ENCODE measurements at regions of chr1 and their contacts with region 1.

Region 1: DNA sequence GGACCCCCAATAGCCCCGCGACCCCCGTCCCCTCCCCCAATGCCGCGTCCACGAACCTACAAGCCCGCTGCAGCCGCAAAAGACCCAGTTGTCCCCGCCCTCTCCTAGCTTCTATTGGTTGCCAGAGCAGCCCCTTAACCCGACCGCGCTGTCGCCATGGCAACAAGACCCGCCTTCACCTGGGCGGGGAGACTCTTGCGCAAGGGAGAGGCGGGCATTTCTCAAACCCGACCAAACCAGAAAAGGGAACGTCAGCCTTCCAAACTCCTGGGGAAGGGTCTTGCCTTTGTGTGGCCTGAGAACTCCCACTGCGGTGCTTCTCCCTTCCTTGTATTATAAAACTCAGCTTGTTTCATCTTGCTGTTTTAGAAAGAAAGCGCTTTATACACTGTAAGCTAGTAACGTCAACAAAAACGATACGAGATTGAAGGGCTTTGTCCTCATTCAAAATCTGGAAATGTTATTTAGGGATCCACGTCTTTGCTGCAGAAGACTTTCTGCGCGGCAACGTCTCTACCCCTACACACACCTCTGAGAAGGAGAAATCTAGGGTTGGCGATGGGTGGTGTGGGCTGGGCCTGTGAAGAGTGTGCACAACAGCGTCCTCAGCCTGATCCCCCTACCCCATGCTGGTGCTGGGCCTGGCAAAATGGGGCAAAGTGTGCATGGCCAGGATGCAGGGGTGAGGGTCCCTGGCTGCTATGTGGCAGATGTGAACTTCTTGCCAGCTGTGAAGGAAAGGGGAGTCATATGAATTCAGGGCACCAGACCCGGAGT is at the start of gene TMEM9:
- DNase-seq: peak; percentile 96
- ATAC-seq: peak; percentile 98
- H3K4me3 ChIP-seq: peak within 1 kb of the TSS; percentile 19 to 81 (median 71)
- H3K4me3 Mint-ChIP-seq: peak within 1 kb of the TSS; percentile 90
- H3K27ac ChIP-seq: peak within 1 kb of the TSS in 1 of 2 donors; percentile 52
- H3K27ac Mint-ChIP-seq: peak within 1 kb of the TSS; percentile 86
- H3K4me1 ChIP-seq: peaks cover 9 to 17% of the 10 kb centered on the region in 2 donors
- H3K4me1 Mint-ChIP-seq: peaks cover 18% of the 10 kb centered on the region
- H3K27me3 ChIP-seq: peaks cover 0 to 16% (median 4%) of the 10 kb centered on the region in 4 experiments
- H3K27me3 Mint-ChIP-seq: peaks cover 14% of the 10 kb centered on the region
- CTCF ChIP-seq: no peak
- total RNA-seq, gene TMEM9: 28.9 and 29.2 TPM in 2 replicates

Region 2: GRCh38 chr1:201053158-201053860 is 101.3 kb before region 1 on chr1:
- CTCF ChIA-PET with region 1: no interaction called
- POLR2A ChIA-PET with region 1: no interaction called
- intact Hi-C with region 1: no loop called
- DNase-seq: no peak
- ATAC-seq: peak; percentile 65
- H3K4me3 ChIP-seq: no peak overlapping the region
- H3K4me3 Mint-ChIP-seq: no peak overlapping the region
- H3K27ac ChIP-seq: no peak overlapping the region
- H3K27ac Mint-ChIP-seq: no peak overlapping the region
- H3K4me1 ChIP-seq: peaks cover 32 to 74% of the 10 kb centered on the region in 2 donors
- H3K4me1 Mint-ChIP-seq: peaks cover 65% of the 10 kb centered on the region
- H3K27me3 ChIP-seq: peaks cover 0 to 2% (median 0%) of the 10 kb centered on the region in 4 experiments
- H3K27me3 Mint-ChIP-seq: no peaks in the 10 kb centered on the region
- CTCF ChIP-seq: no peak

Region 3: GRCh38 chr1:201114236-201115131 is 40.1 kb before region 1 on chr1:
- CTCF ChIA-PET with region 1: interaction called, 3 read pairs
- POLR2A ChIA-PET with region 1: interaction called, 3 read pairs
- intact Hi-C with region 1: loop called (anchors 1 kb)
- DNase-seq: peak; percentile 78
- ATAC-seq: peak; percentile 88
- H3K4me3 ChIP-seq: peak overlapping the region; percentile 31 to 77 (median 58)
- H3K4me3 Mint-ChIP-seq: peak overlapping the region; percentile 87
- H3K27ac ChIP-seq: no peak overlapping the region
- H3K27ac Mint-ChIP-seq: no peak overlapping the region
- H3K4me1 ChIP-seq: peaks cover 4 to 13% of the 10 kb centered on the region in 2 donors
- H3K4me1 Mint-ChIP-seq: peaks cover 4% of the 10 kb centered on the region
- H3K27me3 ChIP-seq: peaks cover 0 to 32% (median 14%) of the 10 kb centered on the region in 4 experiments
- H3K27me3 Mint-ChIP-seq: peaks cover 29% of the 10 kb centered on the region
- CTCF ChIP-seq: peak; percentile 75

Region 4: GRCh38 chr1:201170533-201171062 is 16.0 kb after region 1 on chr1:
- CTCF ChIA-PET with region 1: interaction called, 6 read pairs
- POLR2A ChIA-PET with region 1: interaction called, 7 read pairs
- intact Hi-C with region 1: loop called (anchors 1 kb)
- DNase-seq: peak; percentile 77
- ATAC-seq: peak; percentile 99
- H3K4me3 ChIP-seq: peak overlapping the region in 4 of 5 experiments; percentile 43 to 80 (median 62)
- H3K4me3 Mint-ChIP-seq: peak overlapping the region; percentile 90
- H3K27ac ChIP-seq: peak overlapping the region in 1 of 2 donors; percentile 20
- H3K27ac Mint-ChIP-seq: peak overlapping the region; percentile 77
- H3K4me1 ChIP-seq: peaks cover 7 to 14% of the 10 kb centered on the region in 2 donors
- H3K4me1 Mint-ChIP-seq: peaks cover 16% of the 10 kb centered on the region
- H3K27me3 ChIP-seq: peaks cover 0 to 22% (median 0%) of the 10 kb centered on the region in 4 experiments
- H3K27me3 Mint-ChIP-seq: peaks cover 13% of the 10 kb centered on the region
- CTCF ChIP-seq: no peak

Region 5: DNA sequence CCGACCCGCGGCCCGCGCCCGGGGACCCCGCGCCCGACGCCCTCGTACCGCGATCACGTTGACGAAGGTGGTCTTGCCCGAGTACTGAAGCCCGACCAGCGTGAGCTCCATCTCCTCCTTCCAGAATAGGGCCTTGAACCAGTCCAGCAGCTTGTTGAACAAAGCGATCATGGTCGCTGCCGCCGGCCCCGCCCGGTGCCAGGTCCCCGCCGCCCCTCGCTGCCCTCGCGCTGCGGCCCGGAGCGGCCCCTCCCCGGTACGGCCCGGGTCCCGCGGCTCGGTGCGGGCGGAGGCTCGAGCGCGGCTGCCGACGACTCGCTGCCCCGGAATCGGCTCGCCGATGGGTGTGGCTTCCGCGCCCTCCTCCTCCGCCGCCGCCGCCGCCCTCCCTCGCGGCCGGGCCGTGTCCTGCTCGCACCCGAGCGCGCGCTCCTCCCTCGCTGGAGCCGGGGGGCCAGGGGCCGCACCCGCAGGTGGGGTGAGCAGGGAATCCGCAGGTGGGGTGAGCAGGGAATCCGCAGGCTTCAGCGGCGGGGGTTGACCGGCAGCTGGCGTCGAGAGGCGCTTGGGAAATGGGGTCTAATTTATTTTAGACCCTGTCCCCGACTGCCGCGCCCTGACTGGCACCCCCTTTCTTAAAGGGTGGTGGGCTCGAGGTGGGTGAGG is 990.0 kb after region 1 on chr1 and contains the start of gene ARL8A:
- CTCF ChIA-PET with region 1: no interaction called
- POLR2A ChIA-PET with region 1: no interaction called
- intact Hi-C with region 1: loop called (anchors 10 kb)
- DNase-seq: peak; percentile 78
- ATAC-seq: peak; percentile 74
- H3K4me3 ChIP-seq: peak within 1 kb of the TSS; percentile 74 to 92 (median 88)
- H3K4me3 Mint-ChIP-seq: peak within 1 kb of the TSS; percentile 93
- H3K27ac ChIP-seq: peak within 1 kb of the TSS; percentile 65 to 90
- H3K27ac Mint-ChIP-seq: peak within 1 kb of the TSS; percentile 95
- H3K4me1 ChIP-seq: peaks cover 30 to 43% of the 10 kb centered on the region in 2 donors
- H3K4me1 Mint-ChIP-seq: peaks cover 47% of the 10 kb centered on the region
- H3K27me3 ChIP-seq: no peaks in the 10 kb centered on the region
- H3K27me3 Mint-ChIP-seq: no peaks in the 10 kb centered on the region
- CTCF ChIP-seq: no peak
- total RNA-seq, gene ARL8A: 66.8 and 70.7 TPM in 2 replicates